Gastrocnemius medialis (tissue), 4 donors: ENCODE measurements at regions of chr10 and their contacts with region 1.

Region 1: DNA sequence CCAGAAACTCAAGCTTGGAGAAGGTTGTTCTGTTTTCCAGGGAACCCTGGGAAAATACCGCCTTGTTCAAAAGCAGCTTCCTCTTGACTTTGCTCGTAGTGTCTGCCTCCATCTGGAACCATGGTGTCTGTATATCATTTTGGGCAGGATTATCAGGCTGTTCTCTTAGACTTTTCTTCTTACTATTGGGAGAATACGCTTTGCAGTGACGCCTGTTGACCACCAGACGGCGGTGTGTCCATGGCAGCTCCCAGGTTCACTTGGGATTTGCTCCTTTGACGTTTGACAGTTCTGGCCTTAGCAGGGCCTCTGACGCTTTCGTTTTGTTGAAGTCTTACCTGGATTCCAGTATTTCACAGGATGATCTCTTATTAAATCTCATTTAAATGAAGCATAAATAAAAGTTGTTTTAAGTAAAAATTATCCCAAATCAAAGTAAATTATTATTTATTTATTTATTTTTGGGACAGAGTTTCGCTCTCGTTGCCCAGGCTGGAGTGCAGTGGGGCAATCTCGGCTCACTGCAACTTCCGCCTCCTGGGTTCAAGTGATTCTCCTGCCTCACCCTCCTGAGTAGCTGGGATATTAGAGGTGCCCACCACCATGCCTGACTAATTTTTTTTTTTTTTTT is 41.8 kb upstream of the GJD4 start:
- DNase-seq: peak in 1 of 2 donors; percentile 31
- ATAC-seq: peak in 1 of 2 donors; percentile 61
- H3K4me3 ChIP-seq: no peak overlapping the region
- H3K27ac ChIP-seq: peak overlapping the region in 2 of 4 donors; percentile 3 to 21
- H3K4me1 ChIP-seq: peaks cover 28 to 34% of the 10 kb centered on the region in 2 donors
- H3K27me3 ChIP-seq: no peaks in the 10 kb centered on the region
- CTCF ChIP-seq: peak; percentile 78 to 92 (median 85)
- POLR2A ChIP-seq: no peak

Region 2: DNA sequence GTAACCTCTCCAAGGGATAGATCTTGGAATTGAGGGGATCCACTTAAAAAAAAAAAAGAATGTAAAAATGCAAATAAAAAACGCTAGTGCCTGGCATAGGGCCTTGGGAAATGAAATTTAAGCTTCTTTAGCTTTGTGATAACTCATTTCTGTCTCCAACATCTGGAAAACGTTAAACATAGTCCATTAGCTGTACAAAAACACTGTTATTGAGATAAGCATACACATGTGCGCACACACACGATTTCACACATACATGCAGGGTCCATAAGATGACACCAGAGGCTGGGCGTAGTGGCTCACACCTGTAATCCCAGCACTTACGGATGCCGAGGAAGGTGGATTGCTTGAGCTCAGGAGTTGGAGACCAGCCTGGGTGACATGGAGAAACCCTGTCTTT is 459.5 kb before region 1 on chr10:
- in situ Hi-C with region 1: loop called in 1 of 4 experiments (anchors 25 kb)
- intact Hi-C with region 1: no loop called
- DNase-seq: no peak
- ATAC-seq: no peak
- H3K4me3 ChIP-seq: no peak overlapping the region
- H3K27ac ChIP-seq: no peak overlapping the region
- H3K4me1 ChIP-seq: no peaks in the 10 kb centered on the region
- H3K27me3 ChIP-seq: no peaks in the 10 kb centered on the region
- CTCF ChIP-seq: no peak
- POLR2A ChIP-seq: no peak

Region 3: DNA sequence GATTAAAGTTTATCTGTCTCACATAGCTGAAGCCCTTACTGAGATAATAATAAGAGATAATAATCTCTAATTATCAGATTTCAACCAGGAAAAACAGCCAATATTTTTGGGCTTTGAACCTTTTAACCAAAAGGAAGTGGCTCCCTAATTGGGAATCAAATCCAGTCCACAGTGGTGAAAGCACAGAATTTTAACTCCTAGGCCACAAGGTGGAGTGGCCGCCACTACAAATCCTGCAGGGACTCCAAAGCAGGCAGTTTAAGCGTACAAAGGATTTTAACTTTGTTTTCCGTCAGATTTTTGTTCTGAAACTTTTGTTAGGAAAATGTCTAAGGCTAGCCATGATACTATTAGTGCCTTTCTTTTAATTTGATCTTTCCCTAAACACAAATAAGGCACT is 326.6 kb before region 1 on chr10:
- in situ Hi-C with region 1: loop called in 3 of 4 experiments (anchors 5 to 25 kb)
- intact Hi-C with region 1: loop called (anchors 2 kb)
- DNase-seq: no peak
- ATAC-seq: no peak
- H3K4me3 ChIP-seq: no peak overlapping the region
- H3K27ac ChIP-seq: no peak overlapping the region
- H3K4me1 ChIP-seq: no peaks in the 10 kb centered on the region
- H3K27me3 ChIP-seq: no peaks in the 10 kb centered on the region
- CTCF ChIP-seq: no peak
- POLR2A ChIP-seq: no peak

Region 4: GRCh38 chr10:36332926-36333325 is 769.5 kb after region 1 on chr10:
- in situ Hi-C with region 1: no loop called
- intact Hi-C with region 1: no loop called
- DNase-seq: no peak
- ATAC-seq: no peak
- H3K4me3 ChIP-seq: no peak overlapping the region
- H3K27ac ChIP-seq: no peak overlapping the region
- H3K4me1 ChIP-seq: no peaks in the 10 kb centered on the region
- H3K27me3 ChIP-seq: no peaks in the 10 kb centered on the region
- CTCF ChIP-seq: no peak
- POLR2A ChIP-seq: no peak